Sciatic nerve (tissue), 2 donors: ENCODE measurements at regions of chr6 and their contacts with region 1.

Region 1: DNA sequence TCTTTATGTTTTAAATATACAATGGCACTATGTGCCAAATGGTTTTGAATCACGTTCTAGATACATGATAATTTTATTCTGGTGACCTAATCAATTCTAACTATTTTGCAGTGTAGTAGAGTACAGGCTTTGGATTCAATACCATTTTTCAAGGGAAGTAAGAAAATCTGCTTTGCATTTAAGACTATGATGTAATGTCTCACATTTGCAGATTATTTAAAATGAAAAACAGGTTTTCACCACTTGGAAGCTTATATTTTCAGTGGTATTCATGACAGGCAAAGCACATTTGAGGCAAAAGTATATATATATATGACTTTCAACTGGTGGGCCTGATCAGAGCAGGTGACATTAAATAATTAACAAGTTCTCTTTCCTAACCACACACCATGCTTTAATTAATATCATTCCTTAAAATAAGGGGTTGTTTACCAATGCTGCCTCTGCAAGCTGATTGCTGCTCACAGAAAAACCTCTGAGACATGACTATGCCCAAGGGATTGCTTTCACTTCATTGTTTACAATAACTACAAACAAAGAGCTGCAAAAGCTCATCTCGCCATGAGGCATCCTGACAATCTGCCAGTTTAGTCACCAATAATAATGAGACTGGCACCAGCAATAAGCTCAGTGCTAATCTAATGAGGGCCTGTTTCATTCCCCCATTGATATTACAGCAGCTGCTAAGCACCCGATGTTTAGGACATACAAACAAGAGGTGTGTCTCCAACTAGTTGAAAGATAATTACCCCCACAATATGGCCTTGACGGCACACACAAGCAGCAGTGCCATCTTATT is 1176.0 kb upstream of the GJE1 start:
- DNase-seq: no peak
- ATAC-seq: no peak

Region 2: GRCh38 chr6:140940251-140940925 is 16.4 kb before region 1 on chr6:
- intact Hi-C with region 1: loop called (anchors 1 kb)
- DNase-seq: no peak
- ATAC-seq: no peak